ENCODE measurements at regions of chr16 and their contacts with region 1.

Region 1: DNA sequence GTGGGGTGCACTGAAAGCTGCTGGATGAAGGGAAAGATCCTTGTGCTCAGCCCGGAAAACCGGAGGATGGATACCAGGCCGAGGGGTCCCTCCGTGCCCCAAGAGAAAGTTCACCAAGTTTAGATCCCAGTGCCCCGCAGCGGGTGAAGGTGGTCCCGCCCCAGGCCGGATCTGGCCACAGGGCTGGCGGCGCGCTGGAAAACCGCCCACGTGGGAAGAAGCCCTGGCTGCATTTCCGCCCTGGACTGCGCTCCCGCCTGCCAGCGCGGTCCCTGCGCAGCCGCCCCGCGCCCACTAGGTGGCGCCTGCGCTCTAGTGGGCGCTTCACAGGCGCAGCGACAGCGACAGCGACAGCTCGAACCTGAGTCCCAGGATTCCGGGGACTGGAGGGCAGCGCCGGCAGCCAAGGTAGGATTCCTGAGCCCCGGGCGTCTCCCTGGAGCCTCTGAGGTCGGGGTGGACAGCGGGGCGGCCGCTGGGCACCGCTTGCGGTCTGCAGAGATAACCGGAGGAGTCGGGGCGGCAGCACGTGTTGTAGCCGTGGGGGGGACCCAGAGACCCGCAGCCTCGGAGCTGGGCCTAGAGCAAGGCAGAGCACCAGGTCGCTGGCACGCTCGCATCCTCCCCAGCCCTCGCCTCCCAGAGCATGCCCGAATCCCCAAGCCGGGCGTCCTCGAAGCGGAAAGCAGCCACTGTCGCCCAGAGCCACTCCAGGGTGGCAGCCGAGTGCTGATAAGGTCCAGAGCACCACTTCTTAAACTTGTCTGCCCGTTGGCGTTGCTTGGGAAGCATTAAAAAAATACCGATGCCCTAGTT is at the start of gene CHD9:
- DNase-seq: peak; percentile 79
- H3K4me3 ChIP-seq: peak within 1 kb of the TSS; percentile 51 to 64
- H3K27ac ChIP-seq: peak within 1 kb of the TSS; percentile 87
- H3K4me1 ChIP-seq: no peaks in the 10 kb centered on the region
- H3K27me3 ChIP-seq: no peaks in the 10 kb centered on the region
- CTCF ChIP-seq: peak; percentile 99 to 100 (median 99)
- POLR2A ChIP-seq: peak; percentile 36
- total RNA-seq, gene CHD9: 56.3 to 62.6 TPM

Region 2: GRCh38 chr16:53091466-53092211 is 36.8 kb after region 1 on chr16:
- intact Hi-C with region 1: loop called (anchors 5 kb)
- DNase-seq: no peak
- H3K4me3 ChIP-seq: no peak overlapping the region
- H3K27ac ChIP-seq: peak overlapping the region; percentile 74 to 81
- H3K4me1 ChIP-seq: peaks cover 13% of the 10 kb centered on the region
- H3K27me3 ChIP-seq: no peaks in the 10 kb centered on the region
- CTCF ChIP-seq: no peak
- POLR2A ChIP-seq: no peak

Region 3: GRCh38 chr16:53130159-53131049 is 75.5 kb after region 1 on chr16:
- intact Hi-C with region 1: loop called (anchors 1 kb)
- DNase-seq: peak; percentile 97
- H3K4me3 ChIP-seq: peak overlapping the region; percentile 83 to 86
- H3K27ac ChIP-seq: peak overlapping the region; percentile 93 to 94
- H3K4me1 ChIP-seq: no peaks in the 10 kb centered on the region
- H3K27me3 ChIP-seq: no peaks in the 10 kb centered on the region
- CTCF ChIP-seq: peak; percentile 44 to 95 (median 78)
- POLR2A ChIP-seq: peak; percentile 67

Region 4: DNA sequence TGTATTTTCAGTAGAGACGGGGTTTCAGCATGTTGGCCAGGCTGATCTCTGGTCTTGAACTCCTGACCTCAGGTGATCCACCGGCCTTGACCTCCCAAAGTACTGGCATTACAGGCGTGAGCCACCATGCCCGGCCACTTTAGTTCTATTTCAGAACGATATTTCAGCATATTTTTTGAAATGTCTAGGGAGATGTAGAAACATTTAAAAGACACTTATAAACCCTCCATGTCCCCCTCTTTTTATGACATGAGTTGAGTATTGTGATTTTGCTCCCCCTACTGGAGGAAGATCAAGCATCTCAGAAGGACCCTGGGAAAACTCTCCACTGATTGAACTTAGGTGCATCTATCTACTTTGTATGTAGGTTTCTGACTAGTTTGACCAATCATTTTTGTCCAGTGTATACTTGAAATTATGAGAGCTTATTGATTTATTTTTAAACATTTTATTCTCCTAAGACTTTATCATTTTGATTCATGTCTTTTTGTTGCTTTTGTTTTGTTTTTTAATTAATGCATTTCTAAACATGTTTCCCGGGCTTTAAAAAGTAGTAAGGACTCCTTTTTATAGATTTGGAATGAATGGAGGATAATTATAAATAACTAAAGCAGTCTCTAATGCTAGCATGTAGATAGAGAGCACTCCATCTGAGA is 105.0 kb after region 1 on chr16:
- intact Hi-C with region 1: loop called (anchors 5 kb)
- DNase-seq: no peak
- H3K4me3 ChIP-seq: no peak overlapping the region
- H3K27ac ChIP-seq: no peak overlapping the region
- H3K4me1 ChIP-seq: no peaks in the 10 kb centered on the region
- H3K27me3 ChIP-seq: no peaks in the 10 kb centered on the region
- CTCF ChIP-seq: peak; percentile 36 to 53 (median 51)
- POLR2A ChIP-seq: no peak

Region 5: GRCh38 chr16:53207810-53208752 is 153.2 kb after region 1 on chr16:
- intact Hi-C with region 1: loop called (anchors 2 kb)
- DNase-seq: peak; percentile 65
- H3K4me3 ChIP-seq: peak overlapping the region; percentile 35 to 36
- H3K27ac ChIP-seq: peak overlapping the region; percentile 83 to 87
- H3K4me1 ChIP-seq: no peaks in the 10 kb centered on the region
- H3K27me3 ChIP-seq: no peaks in the 10 kb centered on the region
- CTCF ChIP-seq: peak in 3 of 4 experiments; percentile 44 to 66 (median 61)
- POLR2A ChIP-seq: peak; percentile 29

Region 6: GRCh38 chr16:53282975-53283946 is 228.4 kb after region 1 on chr16:
- intact Hi-C with region 1: loop called (anchors 10 kb)
- DNase-seq: no peak
- H3K4me3 ChIP-seq: no peak overlapping the region
- H3K27ac ChIP-seq: no peak overlapping the region
- H3K4me1 ChIP-seq: no peaks in the 10 kb centered on the region
- H3K27me3 ChIP-seq: no peaks in the 10 kb centered on the region
- CTCF ChIP-seq: peak in 3 of 4 experiments; percentile 36 to 53 (median 49)
- POLR2A ChIP-seq: no peak